RWPE1 (cell line): ENCODE measurements at regions of chr17 and their contacts with region 1.

Region 1: GRCh38 chr17:64480951-64481350 is 15.9 kb downstream of the POLG2 start:
- DNase-seq: no peak
- H3K27ac ChIP-seq: no peak overlapping the region
- CTCF ChIP-seq: no peak

Region 2: DNA sequence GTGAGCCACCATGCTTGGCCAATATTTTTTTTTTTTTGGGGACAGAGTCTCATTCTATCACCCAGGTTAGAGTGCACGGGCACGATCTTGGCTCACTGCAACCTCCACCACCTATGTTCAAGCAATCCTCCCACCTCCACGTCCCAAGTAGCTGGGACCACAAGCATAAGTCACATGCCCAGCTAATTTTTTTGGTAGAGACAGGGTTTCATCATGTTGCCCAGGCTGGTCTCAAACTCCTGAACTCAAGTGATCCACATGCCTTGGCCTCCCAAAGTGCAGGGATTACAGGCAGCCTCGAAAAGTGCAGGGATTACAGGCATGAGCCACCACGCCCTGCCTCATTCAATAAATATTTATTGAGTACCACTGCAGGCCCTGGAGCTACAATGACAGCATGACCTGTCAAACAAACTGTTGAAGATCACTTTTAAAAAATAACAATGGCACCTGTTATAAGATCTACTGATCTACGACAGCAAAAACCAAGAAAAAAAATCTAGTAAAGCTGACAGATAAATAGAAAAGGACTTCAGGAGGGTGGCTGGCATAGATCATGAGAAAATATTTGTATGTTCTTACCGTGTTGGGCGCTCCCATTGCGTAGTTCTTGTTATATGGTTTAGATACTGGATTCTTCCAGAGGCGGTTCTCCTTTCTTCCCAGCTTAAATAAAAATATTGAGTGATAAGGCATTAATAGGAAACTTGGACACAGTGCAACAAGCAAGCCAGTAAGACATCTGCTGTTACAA is 102.1 kb after region 1 on chr17:
- CTCF ChIA-PET with region 1: no interaction called
- POLR2A ChIA-PET with region 1: interaction called, 11 read pairs
- DNase-seq: no peak
- H3K27ac ChIP-seq: no peak overlapping the region
- CTCF ChIP-seq: no peak